Ovary (tissue), 10 donors: ENCODE measurements at regions of chr7 and their contacts with region 1.

Region 1: GRCh38 chr7:98495200-98495955 is 94.5 kb upstream of the BAIAP2L1 start:
- DNase-seq: no peak
- H3K4me3 ChIP-seq: no peak overlapping the region
- H3K27ac ChIP-seq: no peak overlapping the region
- H3K4me1 ChIP-seq: no peaks in the 10 kb centered on the region
- H3K27me3 ChIP-seq: no peaks in the 10 kb centered on the region
- CTCF ChIP-seq: no peak
- EP300 ChIP-seq: no peak
- POLR2A ChIP-seq: no peak

Region 2: GRCh38 chr7:98448766-98449165 is 46.6 kb before region 1 on chr7:
- intact Hi-C with region 1: loop called in 1 of 4 experiments (anchors 5 kb)
- DNase-seq: no peak
- H3K4me3 ChIP-seq: no peak overlapping the region
- H3K27ac ChIP-seq: no peak overlapping the region
- H3K4me1 ChIP-seq: no peaks in the 10 kb centered on the region
- H3K27me3 ChIP-seq: no peaks in the 10 kb centered on the region
- CTCF ChIP-seq: no peak
- EP300 ChIP-seq: no peak
- POLR2A ChIP-seq: no peak